Endothelial cell of umbilical vein (primary cell): ENCODE measurements at regions of chr2 and their contacts with region 1.

Region 1: GRCh38 chr2:125684932-125685331 is 971.0 kb upstream of the GYPC start:
- DNase-seq: no peak
- H3K4me3 ChIP-seq: no peak overlapping the region
- H3K27ac ChIP-seq: no peak overlapping the region
- H3K4me1 ChIP-seq: no peaks in the 10 kb centered on the region
- H3K27me3 ChIP-seq: no peaks in the 10 kb centered on the region
- CTCF ChIP-seq: no peak
- POLR2A ChIP-seq: no peak

Region 2: DNA sequence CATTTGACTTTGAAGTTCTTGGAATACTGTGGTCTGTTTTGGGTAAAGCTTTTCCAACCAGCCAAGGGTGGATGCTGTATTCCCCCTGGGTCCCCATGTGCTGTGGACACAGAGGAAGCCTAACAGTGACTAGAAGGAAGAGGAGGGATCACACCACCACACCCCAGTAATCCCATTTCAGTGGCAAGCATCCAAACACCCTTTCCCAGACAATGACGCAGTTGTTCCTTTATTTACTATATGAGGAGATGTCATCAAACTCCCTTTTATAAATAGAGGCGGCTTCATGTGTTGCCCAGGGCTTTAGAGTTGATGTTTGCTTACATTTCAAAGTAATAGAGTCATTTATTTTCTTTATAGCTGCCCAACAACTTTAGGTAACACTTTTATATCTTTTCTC is 11.6 kb after region 1 on chr2:
- CTCF ChIA-PET with region 1: no interaction called
- POLR2A ChIA-PET with region 1: no interaction called
- dilution Hi-C with region 1: no loop called
- intact Hi-C with region 1: loop called (anchors 1 kb)
- DNase-seq: no peak
- H3K4me3 ChIP-seq: no peak overlapping the region
- H3K27ac ChIP-seq: no peak overlapping the region
- H3K4me1 ChIP-seq: no peaks in the 10 kb centered on the region
- H3K27me3 ChIP-seq: no peaks in the 10 kb centered on the region
- CTCF ChIP-seq: no peak
- POLR2A ChIP-seq: no peak